HCT116 (cell line): ENCODE measurements at regions of chrX and their contacts with region 1.

Region 1: DNA sequence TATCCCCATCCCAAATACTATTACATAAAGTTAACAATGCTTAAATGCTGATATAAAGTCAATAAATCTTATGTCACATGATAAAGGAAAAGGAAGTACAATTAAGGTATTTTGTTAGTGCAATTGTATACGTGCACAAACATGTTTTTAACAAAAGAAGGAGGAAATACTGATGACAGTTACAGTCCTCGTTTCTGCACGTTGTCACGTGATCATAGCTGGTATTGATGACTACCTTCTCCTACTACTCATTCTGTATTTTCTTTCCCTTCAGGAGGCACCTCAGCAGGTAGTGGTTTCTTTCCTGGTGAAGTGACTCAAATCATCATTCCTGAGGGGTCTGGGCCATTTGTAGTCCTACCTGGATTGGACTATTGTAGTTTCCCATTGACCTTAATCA is 335.1 kb upstream of the POU3F4 start:
- DNase-seq: no peak
- ATAC-seq: no peak
- H3K4me3 ChIP-seq: no peak overlapping the region
- H3K27ac ChIP-seq: no peak overlapping the region
- H3K4me1 ChIP-seq: no peaks in the 10 kb centered on the region
- H3K27me3 ChIP-seq: no peaks in the 10 kb centered on the region
- CTCF ChIP-seq: no peak
- POLR2A ChIP-seq: no peak
- RAD21 ChIP-seq: no peak

Region 2: DNA sequence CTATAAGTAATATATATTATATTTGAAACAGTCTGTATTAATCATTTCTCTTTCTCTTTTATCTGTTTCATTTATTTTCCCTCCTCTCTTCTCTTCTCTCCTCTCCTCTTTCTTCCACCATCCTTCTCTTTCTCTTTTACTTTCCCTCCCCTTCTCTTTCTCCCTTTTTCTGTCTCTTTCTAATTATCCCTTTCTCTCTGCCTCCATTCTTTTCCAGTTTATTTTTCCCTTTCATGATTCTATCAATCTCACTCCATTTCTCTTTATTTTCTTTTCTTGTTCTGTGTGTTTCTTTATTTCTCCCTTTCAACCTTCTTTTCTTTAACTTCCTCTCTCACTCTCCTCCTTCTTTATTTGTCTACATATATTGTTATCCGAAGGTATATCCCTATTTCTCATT is 64.7 kb before region 1 on chrX:
- CTCF ChIA-PET with region 1: no interaction called
- POLR2A ChIA-PET with region 1: no interaction called
- RAD21 ChIA-PET with region 1: no interaction called
- intact Hi-C with region 1: loop called (anchors 10 kb)
- DNase-seq: no peak
- ATAC-seq: no peak
- H3K4me3 ChIP-seq: no peak overlapping the region
- H3K27ac ChIP-seq: no peak overlapping the region
- H3K4me1 ChIP-seq: no peaks in the 10 kb centered on the region
- H3K27me3 ChIP-seq: no peaks in the 10 kb centered on the region
- CTCF ChIP-seq: no peak
- POLR2A ChIP-seq: no peak
- RAD21 ChIP-seq: no peak

Region 3: DNA sequence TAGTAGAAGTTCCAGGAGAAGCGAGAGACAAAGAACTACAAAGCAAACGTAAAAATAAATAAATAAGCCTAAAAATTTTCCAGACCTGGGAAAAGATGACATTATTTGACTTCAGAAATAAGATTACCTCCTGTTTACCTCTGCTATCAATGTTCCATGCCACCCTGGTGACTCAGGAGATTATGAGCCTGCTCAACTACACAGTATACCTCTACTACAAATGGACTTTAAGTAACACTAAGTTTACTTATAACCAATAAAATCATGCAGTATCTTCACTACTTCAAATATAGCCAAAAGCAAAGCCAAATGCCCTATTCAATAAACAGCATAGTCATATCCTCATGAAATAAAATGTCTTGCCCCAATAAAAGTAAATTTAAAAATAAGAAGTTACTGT is 793.4 kb after region 1 on chrX:
- CTCF ChIA-PET with region 1: no interaction called
- POLR2A ChIA-PET with region 1: no interaction called
- RAD21 ChIA-PET with region 1: no interaction called
- intact Hi-C with region 1: no loop called
- DNase-seq: no peak
- ATAC-seq: no peak
- H3K4me3 ChIP-seq: no peak overlapping the region
- H3K27ac ChIP-seq: no peak overlapping the region
- H3K4me1 ChIP-seq: no peaks in the 10 kb centered on the region
- H3K27me3 ChIP-seq: no peaks in the 10 kb centered on the region
- CTCF ChIP-seq: no peak
- POLR2A ChIP-seq: no peak
- RAD21 ChIP-seq: no peak